HEK293T (cell line): ENCODE measurements at regions of chr3 and their contacts with region 1.

Region 1: GRCh38 chr3:44510000-44510368 is 32.5 kb upstream of the ZNF445 start:
- DNase-seq: no peak

Region 2: GRCh38 chr3:44338010-44338827 is 171.8 kb before region 1 on chr3 and contains the start of gene TCAIM:
- CTCF ChIA-PET with region 1: interaction called, 5 read pairs
- POLR2A ChIA-PET with region 1: interaction called, 15 read pairs
- DNase-seq: peak; percentile 98

Region 3: DNA sequence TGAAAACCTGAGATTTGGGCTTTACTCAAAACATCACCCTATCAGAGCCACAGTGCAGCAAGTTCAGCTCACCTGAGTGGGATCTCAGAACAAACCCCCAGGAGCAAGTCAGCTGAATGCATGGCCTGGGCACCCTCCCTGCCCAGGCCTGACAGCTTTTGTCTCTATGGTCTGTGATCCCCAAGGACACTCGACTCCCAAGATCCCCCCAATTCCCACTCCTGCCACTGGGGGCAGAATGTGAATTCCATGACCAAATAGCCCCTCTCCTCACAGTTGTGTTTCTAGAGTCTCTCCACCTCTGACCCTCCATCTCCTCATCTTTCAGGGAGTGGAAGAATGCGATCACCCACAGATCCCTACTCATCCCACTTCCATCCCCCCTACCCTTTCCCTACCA is 91.4 kb before region 1 on chr3:
- CTCF ChIA-PET with region 1: no interaction called
- POLR2A ChIA-PET with region 1: no interaction called
- DNase-seq: no peak